Endothelial cell of umbilical vein (primary cell): ENCODE measurements at regions of chr20 and their contacts with region 1.

Region 1: DNA sequence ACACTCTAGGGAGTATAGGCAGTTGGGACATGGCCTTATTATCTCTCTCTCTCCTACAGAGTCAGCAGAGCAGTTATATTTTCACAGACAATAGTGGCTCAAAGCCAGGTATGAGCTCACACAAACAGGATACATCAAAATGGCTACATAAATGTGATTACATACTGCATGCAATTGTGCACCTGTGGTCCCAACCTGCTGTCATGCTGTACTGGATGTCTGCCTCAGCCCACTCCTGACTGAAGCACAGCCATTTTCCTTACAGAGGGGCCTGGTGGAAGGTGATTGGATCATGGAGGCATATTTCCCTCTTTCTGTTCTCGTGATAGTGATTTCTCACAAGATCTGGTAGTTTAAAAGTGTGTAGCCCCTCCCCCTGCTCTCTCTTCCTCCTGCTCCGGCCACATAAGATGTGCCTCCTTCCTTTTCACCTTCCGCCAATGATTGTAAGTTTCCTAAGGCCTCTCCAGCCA is 37.0 kb upstream of the SAMHD1 start:
- DNase-seq: peak; percentile 91
- H3K4me3 ChIP-seq: no peak overlapping the region
- H3K27ac ChIP-seq: peak overlapping the region; percentile 68
- H3K4me1 ChIP-seq: peaks cover 8% of the 10 kb centered on the region
- H3K27me3 ChIP-seq: no peaks in the 10 kb centered on the region
- CTCF ChIP-seq: no peak
- POLR2A ChIP-seq: no peak

Region 2: DNA sequence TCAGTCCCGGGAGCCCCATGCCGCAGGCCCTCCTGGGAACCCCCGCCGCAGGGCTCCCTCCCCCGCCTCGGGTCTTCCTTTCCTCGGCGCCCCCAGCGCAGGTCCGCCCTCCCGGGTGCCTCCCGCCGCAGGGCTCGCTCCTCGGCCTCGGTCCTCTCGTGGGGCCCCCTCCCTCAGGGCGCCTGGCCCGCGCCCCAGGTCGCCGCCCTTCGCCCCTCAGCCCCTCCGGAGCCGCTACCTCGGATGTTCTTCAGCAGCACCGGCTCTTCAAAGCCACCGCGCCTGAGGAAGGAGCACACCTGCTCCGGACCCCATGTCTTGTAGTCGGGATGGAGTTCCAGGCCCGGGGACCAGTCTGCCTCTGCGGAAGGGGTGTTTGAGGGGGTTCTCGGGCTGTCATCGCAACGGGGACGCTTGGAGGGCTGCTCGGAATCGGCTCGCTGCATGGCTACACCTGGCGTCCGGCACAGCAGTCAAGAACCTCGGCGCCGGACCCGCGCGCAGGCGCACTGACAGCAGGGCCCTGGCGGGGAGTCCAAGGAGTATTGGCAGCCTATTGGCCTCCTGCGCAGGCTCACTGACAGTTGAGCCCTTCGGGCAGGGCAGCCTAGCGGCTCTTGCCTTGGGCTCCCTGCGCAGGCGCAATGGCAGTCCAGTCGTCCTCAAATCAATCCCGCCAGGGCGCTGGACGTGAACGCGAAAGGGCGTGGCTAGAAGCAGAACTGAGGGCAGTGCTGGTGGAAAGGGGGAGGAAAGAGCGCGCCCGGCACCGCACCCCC is 37.1 kb before region 1 on chr20 and contains the start of gene SAMHD1:
- CTCF ChIA-PET with region 1: no interaction called
- POLR2A ChIA-PET with region 1: no interaction called
- dilution Hi-C with region 1: no loop called
- intact Hi-C with region 1: loop called (anchors 1 kb)
- DNase-seq: peak; percentile 98
- H3K4me3 ChIP-seq: peak within 1 kb of the TSS; percentile 70 to 81 (median 76)
- H3K27ac ChIP-seq: no peak within 1 kb of the TSS
- H3K4me1 ChIP-seq: peaks cover 10% of the 10 kb centered on the region
- H3K27me3 ChIP-seq: no peaks in the 10 kb centered on the region
- CTCF ChIP-seq: peak in 1 of 2 donors; percentile 15
- POLR2A ChIP-seq: peak; percentile 70
- total RNA-seq, gene SAMHD1: 27.5 and 28.3 TPM in 2 replicates

Region 3: GRCh38 chr20:36967636-36968035 is 20.9 kb before region 1 on chr20:
- CTCF ChIA-PET with region 1: no interaction called
- POLR2A ChIA-PET with region 1: no interaction called
- dilution Hi-C with region 1: no loop called
- intact Hi-C with region 1: no loop called
- DNase-seq: no peak
- H3K4me3 ChIP-seq: no peak overlapping the region
- H3K27ac ChIP-seq: no peak overlapping the region
- H3K4me1 ChIP-seq: no peaks in the 10 kb centered on the region
- H3K27me3 ChIP-seq: no peaks in the 10 kb centered on the region
- CTCF ChIP-seq: no peak
- POLR2A ChIP-seq: no peak

Region 4: GRCh38 chr20:37071481-37071911 is 83.0 kb after region 1 on chr20:
- CTCF ChIA-PET with region 1: no interaction called
- POLR2A ChIA-PET with region 1: no interaction called
- dilution Hi-C with region 1: no loop called
- intact Hi-C with region 1: no loop called
- DNase-seq: no peak
- H3K4me3 ChIP-seq: no peak overlapping the region
- H3K27ac ChIP-seq: no peak overlapping the region
- H3K4me1 ChIP-seq: no peaks in the 10 kb centered on the region
- H3K27me3 ChIP-seq: no peaks in the 10 kb centered on the region
- CTCF ChIP-seq: no peak
- POLR2A ChIP-seq: no peak

Region 5: DNA sequence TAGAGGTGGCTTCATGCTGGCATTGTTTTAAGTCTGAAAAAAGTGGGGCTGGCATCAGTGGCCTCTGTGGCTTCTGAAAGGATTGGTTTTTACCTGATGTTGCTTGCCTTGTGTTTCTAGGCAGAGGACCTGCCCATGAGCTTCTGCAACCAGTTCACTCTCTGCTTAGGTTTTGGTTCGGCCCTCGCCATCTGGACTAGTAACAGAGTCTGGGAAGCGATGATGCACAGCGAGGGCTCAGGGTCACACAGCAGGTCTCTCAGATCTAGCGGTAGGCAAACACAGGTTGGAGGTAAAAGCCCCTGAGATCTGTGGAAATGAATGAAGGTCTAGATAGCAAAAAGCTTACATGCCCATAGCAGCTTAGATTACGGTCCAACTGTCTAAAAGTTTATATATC is 114.0 kb after region 1 on chr20:
- CTCF ChIA-PET with region 1: no interaction called
- POLR2A ChIA-PET with region 1: no interaction called
- dilution Hi-C with region 1: no loop called
- intact Hi-C with region 1: no loop called
- DNase-seq: no peak
- H3K4me3 ChIP-seq: no peak overlapping the region
- H3K27ac ChIP-seq: no peak overlapping the region
- H3K4me1 ChIP-seq: no peaks in the 10 kb centered on the region
- H3K27me3 ChIP-seq: no peaks in the 10 kb centered on the region
- CTCF ChIP-seq: no peak
- POLR2A ChIP-seq: no peak